Calu3 (cell line): ENCODE measurements at regions of chr6 and their contacts with region 1.

Region 1: DNA sequence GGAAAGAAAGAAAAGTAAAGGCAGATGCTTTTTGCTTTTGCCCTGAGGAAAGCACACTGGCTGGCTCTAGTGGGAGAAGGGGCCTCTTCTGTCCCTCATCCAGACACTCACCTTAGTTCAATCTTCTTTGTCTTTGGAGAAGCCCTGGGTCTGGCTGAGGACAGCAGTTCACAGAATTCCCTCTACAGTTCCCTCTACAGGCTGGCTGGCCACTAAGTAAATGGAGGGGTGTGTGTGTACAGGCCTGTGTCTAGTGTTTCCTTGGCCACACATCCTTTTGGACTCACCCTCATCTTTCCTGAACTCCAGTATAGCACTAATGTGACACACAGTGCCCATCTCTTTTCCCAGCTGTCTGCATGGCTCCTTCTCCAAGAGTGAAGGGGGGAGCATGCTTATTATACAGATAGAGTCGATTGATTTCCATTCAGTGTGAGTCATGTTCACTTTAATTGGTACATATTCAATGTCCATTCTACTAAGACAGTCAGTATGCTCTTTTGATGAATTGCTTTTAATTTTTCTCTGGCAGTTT is 26.0 kb upstream of the CLVS2 start:
- DNase-seq: no peak
- H3K4me3 Mint-ChIP-seq: no peak overlapping the region
- H3K27ac Mint-ChIP-seq: no peak overlapping the region
- H3K4me1 Mint-ChIP-seq: no peaks in the 10 kb centered on the region
- H3K27me3 Mint-ChIP-seq: no peaks in the 10 kb centered on the region
- CTCF ChIP-seq: no peak

Region 2: DNA sequence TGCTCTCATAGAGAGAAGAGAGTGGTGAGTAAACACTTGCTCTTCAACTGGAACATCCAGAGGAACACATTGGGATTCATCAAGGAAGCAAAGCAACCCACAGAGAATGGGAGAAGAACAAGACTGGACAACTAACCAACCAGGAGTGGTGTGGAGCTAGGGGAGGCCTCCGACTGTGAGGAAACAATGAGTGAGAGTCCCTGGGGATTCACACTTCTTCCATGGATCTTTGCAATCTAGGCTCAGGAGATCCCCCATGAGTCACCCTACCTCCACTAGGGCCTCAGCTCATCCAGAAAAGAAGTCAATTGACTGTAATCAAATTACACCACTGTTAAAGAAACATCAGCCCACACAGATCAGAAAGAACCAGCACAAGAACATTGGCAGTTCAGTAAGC is 16.3 kb before region 1 on chr6:
- CTCF ChIA-PET with region 1: no interaction called
- intact Hi-C with region 1: loop called (anchors 1 kb)
- DNase-seq: no peak
- H3K4me3 Mint-ChIP-seq: no peak overlapping the region
- H3K27ac Mint-ChIP-seq: no peak overlapping the region
- H3K4me1 Mint-ChIP-seq: no peaks in the 10 kb centered on the region
- H3K27me3 Mint-ChIP-seq: no peaks in the 10 kb centered on the region
- CTCF ChIP-seq: no peak

Region 3: GRCh38 chr6:123207967-123208510 is 238.0 kb after region 1 on chr6:
- CTCF ChIA-PET with region 1: no interaction called
- intact Hi-C with region 1: no loop called
- DNase-seq: no peak
- H3K4me3 Mint-ChIP-seq: no peak overlapping the region
- H3K27ac Mint-ChIP-seq: no peak overlapping the region
- H3K4me1 Mint-ChIP-seq: no peaks in the 10 kb centered on the region
- H3K27me3 Mint-ChIP-seq: no peaks in the 10 kb centered on the region
- CTCF ChIP-seq: no peak